Activated B cell treated with CpG ODN at 0.5 μM for 24 hours (primary cell): ENCODE measurements at regions of chr20 and their contacts with region 1.

Region 1: DNA sequence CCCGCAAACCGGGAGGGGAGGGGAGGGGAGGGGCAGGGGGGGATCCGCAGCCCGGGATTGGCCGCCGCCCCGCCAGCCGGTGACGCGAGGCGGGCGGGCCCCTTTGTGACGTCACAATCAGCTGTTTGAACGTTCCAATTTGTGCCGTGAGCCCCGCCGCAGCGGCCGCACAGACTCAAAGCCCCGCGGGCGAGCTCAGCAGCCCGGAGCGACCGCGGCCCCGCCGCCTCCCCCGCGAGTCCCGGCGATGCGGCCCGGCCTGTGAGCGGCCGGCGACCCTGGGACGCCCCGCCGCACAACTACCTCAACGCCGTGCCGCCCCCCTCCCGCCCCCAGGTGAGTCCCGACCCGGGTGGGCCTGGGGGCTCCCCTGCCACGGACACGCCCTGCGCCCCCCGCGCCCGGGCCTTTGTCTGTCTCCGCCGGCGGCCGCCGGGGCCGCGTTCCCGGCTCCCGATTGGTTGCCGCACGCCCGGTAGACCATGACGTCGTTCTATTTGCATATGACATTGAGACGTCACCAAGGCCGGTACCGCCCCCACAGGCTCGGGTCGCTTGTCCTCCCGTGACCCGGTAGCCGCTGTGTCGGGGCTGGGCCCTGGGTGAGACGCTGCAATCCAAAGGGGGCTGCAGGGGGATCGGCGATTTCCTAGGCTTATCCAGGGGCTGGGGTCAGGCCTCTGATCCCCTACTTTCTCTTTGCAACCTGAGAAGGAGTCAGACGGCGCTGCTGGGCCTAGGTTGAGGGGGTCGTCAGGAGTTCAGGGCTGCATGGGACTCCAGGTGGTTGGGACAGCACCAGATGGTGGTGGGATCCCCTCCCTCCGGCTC is at the start of gene TP53INP2:
- DNase-seq: peak; percentile 84
- ATAC-seq: peak; percentile 61
- H3K4me3 Mint-ChIP-seq: peak within 1 kb of the TSS; percentile 92
- H3K27ac Mint-ChIP-seq: peak within 1 kb of the TSS; percentile 86
- H3K4me1 Mint-ChIP-seq: peaks cover 21% of the 10 kb centered on the region
- H3K27me3 Mint-ChIP-seq: peaks cover 7% of the 10 kb centered on the region
- CTCF ChIP-seq: no peak
- total RNA-seq, gene TP53INP2: 4.0 and 4.2 TPM in 2 replicates

Region 2: DNA sequence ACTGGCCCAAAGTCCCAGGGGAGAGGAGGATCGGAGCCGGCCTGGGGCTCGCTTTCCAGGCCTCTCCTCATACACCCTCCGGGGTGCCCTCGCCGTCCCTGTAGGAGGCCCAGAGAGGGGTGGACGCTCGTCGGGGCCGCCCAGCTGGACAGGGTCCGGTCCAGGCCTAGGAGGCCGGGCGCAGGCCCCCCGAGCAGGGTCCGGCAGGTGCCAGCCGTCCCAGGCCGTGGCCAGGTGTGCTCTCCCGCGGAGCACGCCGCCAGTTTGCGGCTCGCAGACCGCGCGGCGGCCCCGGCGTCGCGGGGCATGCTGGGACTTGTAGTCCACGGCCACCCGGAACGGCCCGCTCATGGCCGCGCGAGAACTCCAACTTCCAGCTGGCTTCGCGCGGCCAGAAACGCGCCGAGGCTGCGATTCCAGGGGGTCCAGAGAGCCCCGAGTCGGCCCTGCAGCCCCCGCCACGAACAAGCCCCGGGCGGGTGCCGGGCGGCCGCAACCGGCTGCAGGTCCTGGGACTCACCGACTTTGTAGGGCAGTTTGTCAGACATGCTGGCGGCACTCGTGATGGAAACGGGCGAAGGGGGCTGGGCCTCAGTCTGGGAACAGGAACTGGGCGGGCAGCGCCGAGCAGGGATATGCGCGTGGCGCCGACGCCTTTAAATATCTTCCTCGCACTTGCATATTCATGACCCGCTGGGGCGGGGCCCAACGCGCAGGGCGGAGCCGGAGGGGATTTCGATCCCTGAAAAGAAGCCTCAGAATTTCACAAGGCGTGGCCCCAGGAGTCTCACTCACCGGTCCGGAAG is 401.5 kb before region 1 on chr20 and contains the start of gene AHCY:
- CTCF ChIA-PET with region 1: no interaction called
- POLR2A ChIA-PET with region 1: interaction called, 5 read pairs
- intact Hi-C with region 1: loop called (anchors 1 kb)
- DNase-seq: peak; percentile 90
- ATAC-seq: peak; percentile 91
- H3K4me3 Mint-ChIP-seq: peak within 1 kb of the TSS; percentile 94
- H3K27ac Mint-ChIP-seq: peak within 1 kb of the TSS; percentile 93
- H3K4me1 Mint-ChIP-seq: peaks cover 22% of the 10 kb centered on the region
- H3K27me3 Mint-ChIP-seq: no peaks in the 10 kb centered on the region
- CTCF ChIP-seq: no peak
- total RNA-seq, gene AHCY: 77.9 and 83.5 TPM in 2 replicates

Region 3: GRCh38 chr20:34363062-34363464 is 341.3 kb before region 1 on chr20 and contains the start of gene ITCH:
- CTCF ChIA-PET with region 1: no interaction called
- POLR2A ChIA-PET with region 1: no interaction called
- intact Hi-C with region 1: loop called (anchors 2 kb)
- DNase-seq: peak; percentile 88
- ATAC-seq: peak; percentile 96
- H3K4me3 Mint-ChIP-seq: peak within 1 kb of the TSS; percentile 100
- H3K27ac Mint-ChIP-seq: peak within 1 kb of the TSS; percentile 99
- H3K4me1 Mint-ChIP-seq: peaks cover 41% of the 10 kb centered on the region
- H3K27me3 Mint-ChIP-seq: peaks cover 1% of the 10 kb centered on the region
- CTCF ChIP-seq: no peak
- total RNA-seq, gene ITCH: 62.6 and 66.3 TPM in 2 replicates

Region 4: GRCh38 chr20:34516247-34517113 is 187.9 kb before region 1 on chr20 and contains the start of gene DYNLRB1:
- CTCF ChIA-PET with region 1: interaction called, 3 read pairs
- POLR2A ChIA-PET with region 1: interaction called, 8 read pairs
- intact Hi-C with region 1: loop called (anchors 1 kb)
- DNase-seq: peak; percentile 88
- ATAC-seq: peak; percentile 82
- H3K4me3 Mint-ChIP-seq: peak within 1 kb of the TSS; percentile 98
- H3K27ac Mint-ChIP-seq: peak within 1 kb of the TSS; percentile 96
- H3K4me1 Mint-ChIP-seq: peaks cover 48% of the 10 kb centered on the region
- H3K27me3 Mint-ChIP-seq: no peaks in the 10 kb centered on the region
- CTCF ChIP-seq: no peak
- total RNA-seq, gene DYNLRB1: 62.7 and 65.9 TPM in 2 replicates

Region 5: GRCh38 chr20:34558320-34559218 is 145.8 kb before region 1 on chr20 and contains the start of gene MAP1LC3A:
- CTCF ChIA-PET with region 1: no interaction called
- POLR2A ChIA-PET with region 1: interaction called, 4 read pairs
- intact Hi-C with region 1: loop called (anchors 1 kb)
- DNase-seq: peak; percentile 91
- ATAC-seq: peak; percentile 81
- H3K4me3 Mint-ChIP-seq: peak within 1 kb of the TSS; percentile 85
- H3K27ac Mint-ChIP-seq: peak within 1 kb of the TSS; percentile 53
- H3K4me1 Mint-ChIP-seq: peaks cover 21% of the 10 kb centered on the region
- H3K27me3 Mint-ChIP-seq: no peaks in the 10 kb centered on the region
- CTCF ChIP-seq: no peak
- total RNA-seq, gene MAP1LC3A: 1.6 TPM in 2 replicates

Region 6: DNA sequence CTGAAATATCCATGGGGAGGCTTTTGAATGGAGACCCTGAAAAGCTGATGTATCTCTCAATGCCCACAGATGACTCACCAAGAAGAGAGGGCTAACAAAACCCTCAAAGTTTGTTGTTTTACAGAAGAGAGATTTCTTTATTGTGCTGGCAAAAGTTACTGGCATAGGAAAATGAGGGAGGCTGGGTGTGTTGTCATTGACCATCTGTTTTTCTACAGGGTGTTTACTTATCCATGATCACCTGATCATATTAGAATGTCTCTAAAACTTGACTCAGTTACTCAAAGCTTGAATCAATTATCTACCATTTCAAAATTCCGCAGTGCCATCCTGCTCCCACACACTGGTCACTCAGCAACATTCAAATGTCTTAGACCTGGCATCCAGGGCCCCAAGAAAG is 111.2 kb after region 1 on chr20:
- CTCF ChIA-PET with region 1: no interaction called
- POLR2A ChIA-PET with region 1: no interaction called
- intact Hi-C with region 1: no loop called
- DNase-seq: no peak
- ATAC-seq: no peak
- H3K4me3 Mint-ChIP-seq: no peak overlapping the region
- H3K27ac Mint-ChIP-seq: no peak overlapping the region
- H3K4me1 Mint-ChIP-seq: peaks cover 27% of the 10 kb centered on the region
- H3K27me3 Mint-ChIP-seq: no peaks in the 10 kb centered on the region
- CTCF ChIP-seq: no peak

Region 7: GRCh38 chr20:35092524-35093266 is 388.3 kb after region 1 on chr20 and contains the start of gene TRPC4AP:
- CTCF ChIA-PET with region 1: no interaction called
- POLR2A ChIA-PET with region 1: no interaction called
- intact Hi-C with region 1: loop called (anchors 2 kb)
- DNase-seq: peak; percentile 87
- ATAC-seq: peak; percentile 97
- H3K4me3 Mint-ChIP-seq: peak within 1 kb of the TSS; percentile 95
- H3K27ac Mint-ChIP-seq: peak within 1 kb of the TSS; percentile 91
- H3K4me1 Mint-ChIP-seq: peaks cover 49% of the 10 kb centered on the region
- H3K27me3 Mint-ChIP-seq: no peaks in the 10 kb centered on the region
- CTCF ChIP-seq: peak; percentile 34
- total RNA-seq, gene TRPC4AP: 58.3 and 60.2 TPM in 2 replicates